ENCODE measurements at regions of chr19 and their contacts with region 1.

Region 1: GRCh38 chr19:15426485-15427349 is 7.9 kb upstream of the AKAP8L start:
- DNase-seq: no peak
- CTCF ChIP-seq: no peak

Region 2: DNA sequence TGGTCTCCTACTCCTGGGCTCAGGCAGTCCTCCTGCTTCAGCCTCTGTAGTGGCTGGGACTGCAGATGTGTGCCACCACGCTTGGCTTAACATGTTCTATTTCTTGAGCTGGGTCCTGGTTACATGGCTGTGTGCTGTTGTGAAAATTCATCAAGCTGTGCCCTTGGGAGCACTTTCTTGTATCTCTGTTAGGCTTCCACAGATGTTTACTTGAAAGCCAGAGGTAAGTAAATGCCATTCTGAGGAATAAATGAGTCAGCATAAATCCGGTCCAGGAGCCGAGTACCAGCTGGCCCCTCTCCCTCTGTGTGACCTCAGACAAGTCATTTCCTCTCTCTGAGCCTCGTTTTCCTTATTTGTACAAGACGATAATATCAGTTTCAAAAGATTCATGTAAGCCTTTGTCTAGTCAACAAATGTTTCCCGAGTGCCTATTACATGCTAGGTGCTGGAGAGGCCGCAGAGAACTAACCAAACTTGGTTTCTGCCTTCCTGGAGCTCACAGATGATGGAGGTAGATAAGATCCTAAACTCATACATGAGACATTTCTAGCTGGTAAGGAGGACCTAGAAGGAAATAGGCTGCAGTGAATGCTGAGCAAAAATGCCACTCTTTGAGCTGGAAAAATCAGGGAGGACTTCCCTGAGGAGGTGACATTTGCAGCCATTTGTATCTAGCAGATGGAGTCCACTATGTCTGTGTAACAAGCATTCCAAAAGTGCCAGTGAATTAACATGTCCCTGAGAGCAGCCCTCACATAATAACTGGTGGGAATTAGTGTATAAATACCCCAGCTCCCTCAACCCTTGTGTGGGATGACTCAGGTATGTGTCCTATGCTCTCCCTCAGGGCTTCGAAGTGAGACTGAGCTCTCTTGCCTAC is 40.4 kb after region 1 on chr19:
- in situ Hi-C with region 1: no loop called
- DNase-seq: peak; percentile 59
- CTCF ChIP-seq: no peak

Region 3: DNA sequence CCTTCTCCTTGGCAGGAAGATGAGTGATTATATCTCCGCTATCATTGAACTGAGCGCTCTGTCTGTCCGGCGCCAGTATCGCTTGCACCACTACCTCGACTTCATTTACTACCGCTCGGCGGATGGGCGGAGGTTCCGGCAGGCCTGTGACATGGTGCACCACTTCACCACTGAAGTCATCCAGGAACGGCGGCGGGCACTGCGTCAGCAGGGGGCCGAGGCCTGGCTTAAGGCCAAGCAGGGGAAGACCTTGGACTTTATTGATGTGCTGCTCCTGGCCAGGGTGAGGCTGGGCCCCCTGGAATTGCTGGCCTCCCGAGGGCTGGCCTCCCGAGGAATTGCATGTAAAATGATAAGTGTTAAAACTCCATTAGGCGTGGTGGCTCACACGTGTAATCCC is 113.7 kb after region 1 on chr19:
- in situ Hi-C with region 1: loop called (anchors 5 kb)
- DNase-seq: no peak
- CTCF ChIP-seq: no peak

Measured in GM13976 (cell line).